Calu3 (cell line): ENCODE measurements at regions of chr15 and their contacts with region 1.

Region 1: GRCh38 chr15:96585484-96586386 is 255.2 kb downstream of the NR2F2 start:
- DNase-seq: no peak
- H3K4me3 Mint-ChIP-seq: no peak overlapping the region
- H3K27ac Mint-ChIP-seq: no peak overlapping the region
- H3K4me1 Mint-ChIP-seq: peaks cover 9% of the 10 kb centered on the region
- H3K27me3 Mint-ChIP-seq: no peaks in the 10 kb centered on the region
- CTCF ChIP-seq: peak; percentile 44

Region 2: DNA sequence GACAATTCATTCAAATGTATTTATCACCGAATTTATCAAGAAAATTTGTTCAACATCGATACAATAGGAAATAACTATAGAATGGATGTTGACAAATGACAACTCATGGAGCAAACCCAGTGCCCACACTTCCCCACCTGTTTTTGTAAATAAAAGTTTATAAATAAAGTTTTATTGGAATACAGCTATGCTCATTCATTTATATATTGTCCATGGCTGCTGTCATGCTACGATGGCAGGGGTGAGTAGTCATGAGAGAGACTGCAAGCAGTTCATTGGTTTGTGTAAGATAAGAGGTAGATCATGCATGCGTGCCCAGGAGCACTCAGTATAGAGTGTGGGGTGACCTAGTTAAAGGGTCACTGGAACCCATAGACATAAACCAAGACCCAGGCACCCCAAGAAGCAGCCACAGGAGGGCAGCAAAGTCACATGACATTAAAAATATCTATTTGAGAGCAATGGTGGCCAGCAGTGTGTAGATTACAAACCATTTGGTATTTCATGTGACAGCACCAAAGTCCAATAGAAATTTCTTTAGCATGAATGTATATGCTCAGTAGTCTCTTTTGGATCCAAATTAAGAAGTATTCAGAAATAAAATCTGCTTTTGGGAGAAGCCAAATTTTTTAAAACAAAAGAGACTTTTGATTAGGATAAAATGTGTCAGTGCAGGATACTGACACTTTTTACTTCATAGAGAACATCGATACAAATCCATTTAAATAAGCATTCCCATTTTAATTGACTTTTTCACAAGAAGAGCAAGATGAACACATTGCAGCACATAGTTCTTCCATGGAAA is 1559.6 kb before region 1 on chr15:
- CTCF ChIA-PET with region 1: no interaction called
- intact Hi-C with region 1: loop called (anchors 5 kb)
- DNase-seq: peak; percentile 78
- H3K4me3 Mint-ChIP-seq: no peak overlapping the region
- H3K27ac Mint-ChIP-seq: no peak overlapping the region
- H3K4me1 Mint-ChIP-seq: peaks cover 7% of the 10 kb centered on the region
- H3K27me3 Mint-ChIP-seq: no peaks in the 10 kb centered on the region
- CTCF ChIP-seq: peak; percentile 75

Region 3: DNA sequence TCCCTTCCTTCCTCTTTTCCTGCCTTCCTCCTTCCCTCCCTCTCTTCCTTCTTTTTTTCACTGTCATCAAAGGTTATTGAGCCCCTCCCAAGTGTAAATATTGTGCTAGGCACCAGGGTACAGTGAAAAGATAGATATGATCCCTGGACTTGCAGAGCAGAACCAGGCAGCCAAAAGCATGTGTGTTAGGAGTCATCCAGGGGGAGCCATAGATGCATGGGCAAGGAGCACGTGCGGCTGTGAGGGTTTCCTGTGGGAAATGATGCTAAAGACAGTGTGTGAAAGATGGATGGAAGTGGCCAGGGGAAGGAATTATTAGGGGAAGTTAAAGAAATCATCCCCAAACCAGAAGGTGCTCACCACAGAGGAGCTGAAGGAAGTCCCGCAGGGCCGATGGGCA is 190.0 kb before region 1 on chr15:
- CTCF ChIA-PET with region 1: no interaction called
- intact Hi-C with region 1: loop called (anchors 1 kb)
- DNase-seq: no peak
- H3K4me3 Mint-ChIP-seq: no peak overlapping the region
- H3K27ac Mint-ChIP-seq: no peak overlapping the region
- H3K4me1 Mint-ChIP-seq: peaks cover 18% of the 10 kb centered on the region
- H3K27me3 Mint-ChIP-seq: no peaks in the 10 kb centered on the region
- CTCF ChIP-seq: no peak

Region 4: DNA sequence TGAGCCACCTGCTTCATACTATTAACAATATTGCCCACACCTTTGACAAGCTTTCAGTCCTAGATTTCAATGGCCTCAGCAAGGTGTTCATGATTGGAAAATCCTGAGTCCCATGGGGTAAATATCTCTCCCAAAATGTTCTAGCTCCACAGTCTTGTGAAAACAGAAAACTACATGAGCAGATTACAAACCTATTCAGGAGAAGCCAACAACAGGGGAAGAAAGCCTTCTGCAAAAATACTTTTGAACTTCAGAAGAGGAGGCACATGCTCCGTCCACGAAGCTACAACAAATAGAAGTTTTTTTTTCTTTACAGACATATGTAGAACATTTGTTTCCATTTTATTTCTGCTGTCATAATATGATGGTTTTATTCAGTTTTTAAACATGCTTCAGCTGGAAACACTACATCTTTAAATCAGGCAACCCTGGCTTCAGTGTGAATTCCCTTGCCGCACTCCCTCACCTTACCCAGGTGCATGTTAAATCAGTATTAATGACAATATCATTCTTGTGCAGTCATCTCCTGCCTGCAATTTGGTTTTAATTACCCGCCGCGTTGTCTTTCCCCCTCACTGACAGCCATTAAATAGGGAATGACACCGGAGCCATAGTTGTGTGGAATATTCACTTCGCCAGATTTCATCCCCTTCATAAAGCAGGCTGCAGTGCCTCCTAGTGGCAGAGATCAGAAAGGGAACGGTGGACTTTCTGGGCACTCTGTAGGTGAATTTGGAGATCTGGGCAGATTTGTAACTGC is 649.3 kb after region 1 on chr15:
- CTCF ChIA-PET with region 1: no interaction called
- intact Hi-C with region 1: loop called (anchors 5 kb)
- DNase-seq: peak; percentile 76
- H3K4me3 Mint-ChIP-seq: peak overlapping the region; percentile 31
- H3K27ac Mint-ChIP-seq: peak overlapping the region; percentile 60
- H3K4me1 Mint-ChIP-seq: peaks cover 26% of the 10 kb centered on the region
- H3K27me3 Mint-ChIP-seq: no peaks in the 10 kb centered on the region
- CTCF ChIP-seq: peak; percentile 95